ENCODE measurements at regions of chr7 and their contacts with region 1.

Region 1: DNA sequence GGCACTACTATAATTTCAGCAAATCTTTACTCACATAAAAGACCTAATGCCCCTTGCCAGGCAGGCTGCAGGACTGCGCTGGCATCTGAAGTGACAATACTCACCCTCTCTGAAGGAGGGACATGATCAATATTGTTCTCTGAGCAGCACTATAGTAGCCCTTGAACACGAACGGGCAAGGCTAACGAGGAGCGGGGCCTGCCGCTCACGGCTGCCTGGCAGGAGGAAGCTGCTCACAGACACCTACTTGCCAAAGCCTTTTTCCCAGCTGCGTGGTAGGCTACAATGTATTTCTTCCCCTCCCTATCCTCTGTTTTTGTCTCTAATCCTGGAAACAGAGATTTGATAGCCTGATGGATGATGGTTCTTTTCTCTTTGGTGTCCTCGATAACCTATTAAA is 19.9 kb downstream of the PUS7 start:
- DNase-seq: no peak
- H3K4me3 ChIP-seq: no peak overlapping the region
- H3K27ac ChIP-seq: no peak overlapping the region
- H3K4me1 ChIP-seq: peaks cover under 1 to 2% of the 10 kb centered on the region in 2 experiments
- H3K27me3 ChIP-seq: no peaks in the 10 kb centered on the region
- CTCF ChIP-seq: no peak
- EP300 ChIP-seq: no peak
- RAD21 ChIP-seq: no peak

Region 2: DNA sequence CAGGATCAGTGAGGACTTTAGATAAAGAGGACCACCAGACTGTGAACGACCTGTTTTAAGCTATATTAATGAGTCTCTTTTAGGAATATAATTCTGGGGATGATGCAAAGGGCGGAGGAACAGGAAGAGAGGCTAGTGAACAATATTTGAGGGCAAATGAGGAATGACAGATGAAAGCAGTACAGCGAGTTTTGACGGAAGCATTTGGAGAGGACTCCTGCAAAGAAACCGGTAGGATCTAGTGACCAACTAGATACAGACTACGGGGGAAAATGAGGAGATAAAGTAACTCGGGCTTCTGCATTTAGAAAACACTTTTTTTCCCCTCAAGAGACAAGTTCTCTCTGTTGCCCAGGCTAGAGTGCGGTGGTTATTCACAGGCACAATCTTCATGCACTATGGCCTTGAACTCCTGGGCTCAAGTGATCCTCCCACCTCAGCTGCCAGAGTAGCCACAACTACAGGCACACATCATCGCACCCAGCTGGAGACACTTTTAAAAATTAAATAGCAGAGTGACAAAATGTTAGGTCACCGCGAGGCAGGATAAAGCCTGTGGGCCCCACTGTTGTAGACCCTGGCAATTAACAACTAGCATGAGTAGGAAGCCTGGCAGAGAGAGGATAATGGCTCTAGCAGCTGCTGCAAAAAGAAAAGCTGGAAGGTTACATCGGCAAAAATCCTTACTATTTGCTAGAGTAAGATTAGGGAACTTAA is 256.6 kb before region 1 on chr7:
- CTCF ChIA-PET with region 1: no interaction called
- POLR2A ChIA-PET with region 1: no interaction called
- DNase-seq: peak; percentile 62
- H3K4me3 ChIP-seq: no peak overlapping the region
- H3K27ac ChIP-seq: peak overlapping the region in 1 of 2 experiments; percentile 45; a peak in 2 of 4 replicates
- H3K4me1 ChIP-seq: peaks cover 19 to 22% of the 10 kb centered on the region in 2 experiments; a peak in 3 of 4 replicates
- H3K27me3 ChIP-seq: no peaks in the 10 kb centered on the region
- CTCF ChIP-seq: no peak
- EP300 ChIP-seq: no peak
- RAD21 ChIP-seq: no peak

Region 3: GRCh38 chr7:105387621-105388372 is 114.4 kb before region 1 on chr7:
- CTCF ChIA-PET with region 1: no interaction called
- POLR2A ChIA-PET with region 1: no interaction called
- DNase-seq: peak; percentile 87
- H3K4me3 ChIP-seq: peak overlapping the region; percentile 72 to 94
- H3K27ac ChIP-seq: peak overlapping the region; percentile 18 to 46; a peak in 2 of 4 replicates
- H3K4me1 ChIP-seq: peaks cover 0 to 6% of the 10 kb centered on the region in 2 experiments; a peak in 2 of 4 replicates
- H3K27me3 ChIP-seq: no peaks in the 10 kb centered on the region
- CTCF ChIP-seq: peak; percentile 38
- EP300 ChIP-seq: no peak
- RAD21 ChIP-seq: peak; percentile 2; the same call in 1 of the 2 replicates

Region 4: DNA sequence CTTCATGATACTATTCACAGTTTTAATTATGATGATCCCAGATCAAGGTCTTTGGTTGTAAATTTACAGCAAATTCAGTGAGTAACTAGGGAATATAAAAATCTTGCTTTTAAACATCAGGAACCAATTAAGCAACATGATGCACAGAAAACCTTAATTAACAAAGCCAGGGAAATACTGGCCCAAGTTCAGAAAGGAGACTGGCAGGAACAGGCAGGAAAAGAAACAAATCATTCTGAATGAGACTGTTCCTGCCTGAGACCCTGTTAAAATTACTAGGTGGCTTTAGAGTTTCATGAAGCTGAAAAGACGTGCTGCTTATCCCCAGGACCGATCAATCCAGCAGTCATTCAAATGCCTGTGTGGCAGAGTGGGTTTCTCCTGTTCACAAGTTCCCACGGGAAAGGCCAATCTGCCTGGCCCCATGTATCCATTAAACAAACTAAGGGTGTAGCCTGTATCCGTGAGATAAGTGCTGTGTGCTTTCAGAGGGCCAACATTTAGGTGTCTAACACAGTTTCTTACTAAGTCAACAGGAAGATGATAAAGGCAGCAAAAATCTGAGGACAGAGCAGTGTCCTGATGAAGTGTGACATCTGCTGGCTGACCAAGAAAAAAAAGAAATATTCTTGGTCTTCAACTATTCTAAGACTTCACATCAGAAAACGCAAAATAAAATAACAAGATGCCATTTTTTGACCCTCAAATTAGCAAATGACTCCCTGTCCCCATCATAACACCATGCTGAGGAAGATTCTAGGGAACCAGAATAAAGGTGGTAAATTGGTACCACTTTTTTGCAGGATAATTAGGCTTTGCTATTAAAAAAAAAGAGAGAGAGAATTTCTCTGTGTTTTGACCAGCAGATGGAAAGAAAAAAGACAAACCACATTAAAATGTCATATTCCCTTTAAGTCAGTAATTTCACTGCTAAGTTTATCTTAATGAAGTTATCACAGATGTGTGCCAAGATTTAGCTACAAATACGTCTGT is 14.3 kb before region 1 on chr7:
- CTCF ChIA-PET with region 1: interaction called, 10 read pairs
- POLR2A ChIA-PET with region 1: no interaction called
- DNase-seq: peak; percentile 61
- H3K4me3 ChIP-seq: peak overlapping the region in 1 of 2 experiments; percentile 0; a peak in 1 of 4 replicates
- H3K27ac ChIP-seq: peak overlapping the region; percentile 85
- H3K4me1 ChIP-seq: peaks cover 12% of the 10 kb centered on the region in 2 experiments
- H3K27me3 ChIP-seq: no peaks in the 10 kb centered on the region
- CTCF ChIP-seq: peak; percentile 75
- EP300 ChIP-seq: peak in 1 of 2 experiments; percentile 32; a peak in 2 of 4 replicates
- RAD21 ChIP-seq: peak; percentile 74

Region 5: GRCh38 chr7:105934572-105935185 is 432.5 kb after region 1 on chr7:
- CTCF ChIA-PET with region 1: no interaction called
- POLR2A ChIA-PET with region 1: no interaction called
- DNase-seq: peak; percentile 65
- H3K4me3 ChIP-seq: no peak overlapping the region
- H3K27ac ChIP-seq: no peak overlapping the region
- H3K4me1 ChIP-seq: peaks cover 20 to 21% of the 10 kb centered on the region in 2 experiments
- H3K27me3 ChIP-seq: no peaks in the 10 kb centered on the region
- CTCF ChIP-seq: peak; percentile 58
- EP300 ChIP-seq: no peak
- RAD21 ChIP-seq: peak; percentile 93